Heart right ventricle (tissue), 16 donors: ENCODE measurements at regions of chr20 and their contacts with region 1.

Region 1: DNA sequence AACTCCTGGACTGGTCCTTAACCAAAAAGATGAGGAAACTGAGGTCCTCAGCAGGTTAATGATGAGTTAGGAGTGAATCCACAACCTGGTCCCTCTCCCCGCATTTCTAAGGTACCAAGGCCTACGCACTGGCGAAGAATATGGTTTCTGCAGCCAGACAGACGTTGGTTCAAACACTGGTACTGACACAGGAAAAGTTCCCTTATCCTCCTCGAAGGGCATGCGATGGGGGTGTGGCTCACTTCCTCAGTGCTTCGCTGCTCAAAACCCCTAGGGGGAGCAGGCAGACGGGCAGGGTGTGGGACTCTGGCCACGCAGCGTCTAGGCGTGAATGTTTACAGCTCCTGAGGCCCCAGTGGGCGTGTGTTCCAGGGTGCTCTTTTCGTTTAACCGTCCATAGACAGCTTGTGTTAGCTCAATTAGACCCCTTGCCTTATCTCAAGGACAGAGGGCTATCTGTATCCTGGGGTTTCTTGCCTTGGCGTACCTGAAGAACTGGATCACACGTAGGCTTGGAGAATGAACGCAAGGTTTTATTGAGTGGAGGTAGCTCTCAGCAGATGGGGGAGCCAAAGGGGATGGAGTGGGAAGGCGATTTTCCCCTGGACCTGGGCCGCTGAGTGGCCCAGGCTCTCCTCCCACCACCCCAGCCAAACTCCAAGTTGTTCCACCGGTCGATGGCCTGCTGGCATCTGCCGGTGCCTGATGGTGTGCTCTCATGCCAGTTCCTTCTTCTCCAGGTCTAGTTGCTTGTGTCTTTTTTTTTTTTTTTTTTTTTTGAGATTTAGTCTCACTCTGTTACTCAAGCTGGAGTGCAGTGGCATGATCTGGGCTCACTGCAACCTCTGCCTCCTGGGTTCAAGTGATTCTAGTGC is 31.8 kb upstream of the PTPN1 start:
- DNase-seq: peak; percentile 28 to 44
- ATAC-seq: peak; percentile 44 to 84 (median 66)
- H3K4me3 ChIP-seq: no peak overlapping the region
- H3K27ac ChIP-seq: peak overlapping the region in 1 of 10 donors; percentile 12
- H3K4me1 ChIP-seq: peaks cover 0 to 37% (median 12%) of the 10 kb centered on the region in 9 donors
- H3K27me3 ChIP-seq: no peaks in the 10 kb centered on the region
- CTCF ChIP-seq: peak in 8 of 9 donors; percentile 24 to 68 (median 46)

Region 2: DNA sequence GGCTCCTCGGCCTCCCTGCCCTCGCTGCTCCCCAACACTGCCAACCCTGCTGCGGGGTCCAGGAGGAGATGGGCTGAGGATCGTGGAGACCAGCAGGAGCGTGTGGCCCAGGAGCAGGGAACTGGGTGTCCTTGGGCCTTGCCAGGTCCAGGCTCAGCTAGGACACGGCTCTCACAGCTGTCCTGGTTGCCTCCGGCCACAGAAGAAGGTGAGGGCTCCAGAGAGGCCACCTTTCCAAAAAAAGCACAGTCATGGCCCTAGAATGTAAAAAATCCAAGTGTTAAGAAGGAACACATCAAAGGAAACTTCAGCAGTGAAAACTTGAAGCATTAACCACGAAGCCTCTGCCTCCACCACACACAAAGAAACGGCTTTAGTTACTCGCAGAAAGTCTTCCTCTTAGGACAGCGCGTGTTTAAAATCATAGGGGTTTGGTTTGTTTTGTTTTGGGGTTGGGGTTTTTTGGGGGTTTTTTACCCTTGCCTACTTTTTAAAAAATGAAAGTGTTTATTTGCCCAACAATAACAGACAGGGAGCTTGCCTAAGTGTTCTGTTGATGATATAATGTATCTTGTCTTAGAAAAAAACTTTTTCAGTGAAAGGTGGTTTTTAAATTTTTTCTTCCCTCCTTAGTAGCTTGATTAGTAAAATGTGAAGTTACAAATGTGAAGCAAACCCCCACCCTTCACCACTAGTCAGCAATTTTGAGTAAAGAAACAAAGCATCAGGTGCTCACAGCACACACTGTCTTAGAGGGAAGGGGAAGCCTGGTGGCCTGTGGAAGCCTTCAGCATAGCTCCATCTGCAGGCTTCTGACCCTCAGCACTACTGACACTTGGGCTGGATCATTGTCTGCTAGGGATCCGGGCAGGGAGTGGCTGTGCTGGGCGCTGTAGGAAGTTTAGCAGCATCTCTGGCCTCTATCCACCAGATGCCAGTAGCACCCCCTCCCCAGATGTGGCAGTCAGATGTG is 91.8 kb after region 1 on chr20:
- intact Hi-C with region 1: loop called in 4 of 10 experiments (anchors 5 kb)
- DNase-seq: no peak
- ATAC-seq: peak in 4 of 8 donors; percentile 7 to 55 (median 40)
- H3K4me3 ChIP-seq: no peak overlapping the region
- H3K27ac ChIP-seq: peak overlapping the region in 4 of 10 donors; percentile 19 to 69 (median 37)
- H3K4me1 ChIP-seq: peaks cover 10 to 66% (median 52%) of the 10 kb centered on the region in 9 donors
- H3K27me3 ChIP-seq: no peaks in the 10 kb centered on the region
- CTCF ChIP-seq: peak in 7 of 9 donors; percentile 10 to 51 (median 26)